ENCODE measurements at regions of chr10 and their contacts with region 1.

Region 1: GRCh38 chr10:6088721-6089390 is at the start of gene RBM17:
- DNase-seq: peak; percentile 98 to 99
- ATAC-seq: peak; percentile 89 to 96 (median 91)
- H3K4me3 ChIP-seq: peak within 1 kb of the TSS; percentile 84
- H3K4me3 Mint-ChIP-seq: peak within 1 kb of the TSS; percentile 90
- H3K27ac ChIP-seq: peak within 1 kb of the TSS; percentile 43
- H3K27ac Mint-ChIP-seq: peak within 1 kb of the TSS; percentile 78 to 82
- H3K4me1 ChIP-seq: peaks cover 29% of the 10 kb centered on the region
- H3K4me1 Mint-ChIP-seq: peaks cover 46 to 53% of the 10 kb centered on the region in 2 donors
- H3K27me3 ChIP-seq: no peaks in the 10 kb centered on the region
- H3K27me3 Mint-ChIP-seq: peaks cover 7 to 8% of the 10 kb centered on the region in 2 donors
- CTCF ChIP-seq: peak; percentile 100
- total RNA-seq, gene RBM17: 120 to 147 (median 147) TPM

Region 2: DNA sequence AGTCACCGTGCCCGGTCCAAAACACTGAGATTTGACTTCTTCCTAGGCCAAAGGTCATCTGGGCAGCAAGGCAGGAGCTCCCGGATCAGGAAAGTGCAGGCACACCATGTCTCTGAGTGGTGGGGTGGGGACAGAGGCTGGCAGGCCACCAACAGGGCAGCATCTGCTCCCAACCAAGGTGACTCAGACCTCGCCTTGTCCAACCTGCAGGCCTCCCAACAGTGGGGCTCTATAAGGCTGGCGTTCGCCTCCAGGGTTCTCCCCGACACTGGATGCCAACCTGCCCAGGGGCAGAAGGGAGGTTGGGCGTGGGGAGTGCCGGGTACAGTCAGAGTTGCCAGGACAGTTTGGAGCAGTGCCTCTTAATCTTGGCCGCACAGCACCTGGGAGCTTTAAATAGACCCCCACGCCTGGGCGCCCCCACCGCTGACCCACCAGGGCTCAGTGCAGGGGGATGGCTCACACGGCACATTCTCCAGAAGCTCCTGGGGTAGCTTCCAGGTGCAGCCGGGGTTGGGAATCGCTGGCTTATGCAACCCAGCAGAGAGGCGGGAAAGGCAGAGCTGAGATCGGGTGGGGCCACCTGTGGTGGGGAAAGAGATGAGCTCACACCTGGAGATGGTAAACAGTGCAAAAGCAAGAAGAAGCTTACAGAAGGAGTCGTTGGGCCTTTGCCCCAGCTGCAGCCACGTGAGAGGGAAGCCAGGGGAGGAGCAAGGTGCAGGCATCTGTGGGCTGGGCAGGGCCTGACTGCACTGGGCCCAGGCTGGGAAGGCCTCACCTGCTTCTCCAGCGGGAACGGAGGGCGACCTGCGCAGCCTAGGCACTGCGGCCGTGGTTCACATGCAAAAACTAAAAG is 600.3 kb before region 1 on chr10:
- intact Hi-C with region 1: no loop called
- DNase-seq: no peak
- ATAC-seq: no peak
- H3K4me3 ChIP-seq: no peak overlapping the region
- H3K4me3 Mint-ChIP-seq: no peak overlapping the region
- H3K27ac ChIP-seq: no peak overlapping the region
- H3K27ac Mint-ChIP-seq: no peak overlapping the region
- H3K4me1 ChIP-seq: no peaks in the 10 kb centered on the region
- H3K4me1 Mint-ChIP-seq: no peaks in the 10 kb centered on the region
- H3K27me3 ChIP-seq: no peaks in the 10 kb centered on the region
- H3K27me3 Mint-ChIP-seq: no peaks in the 10 kb centered on the region
- CTCF ChIP-seq: no peak

Region 3: DNA sequence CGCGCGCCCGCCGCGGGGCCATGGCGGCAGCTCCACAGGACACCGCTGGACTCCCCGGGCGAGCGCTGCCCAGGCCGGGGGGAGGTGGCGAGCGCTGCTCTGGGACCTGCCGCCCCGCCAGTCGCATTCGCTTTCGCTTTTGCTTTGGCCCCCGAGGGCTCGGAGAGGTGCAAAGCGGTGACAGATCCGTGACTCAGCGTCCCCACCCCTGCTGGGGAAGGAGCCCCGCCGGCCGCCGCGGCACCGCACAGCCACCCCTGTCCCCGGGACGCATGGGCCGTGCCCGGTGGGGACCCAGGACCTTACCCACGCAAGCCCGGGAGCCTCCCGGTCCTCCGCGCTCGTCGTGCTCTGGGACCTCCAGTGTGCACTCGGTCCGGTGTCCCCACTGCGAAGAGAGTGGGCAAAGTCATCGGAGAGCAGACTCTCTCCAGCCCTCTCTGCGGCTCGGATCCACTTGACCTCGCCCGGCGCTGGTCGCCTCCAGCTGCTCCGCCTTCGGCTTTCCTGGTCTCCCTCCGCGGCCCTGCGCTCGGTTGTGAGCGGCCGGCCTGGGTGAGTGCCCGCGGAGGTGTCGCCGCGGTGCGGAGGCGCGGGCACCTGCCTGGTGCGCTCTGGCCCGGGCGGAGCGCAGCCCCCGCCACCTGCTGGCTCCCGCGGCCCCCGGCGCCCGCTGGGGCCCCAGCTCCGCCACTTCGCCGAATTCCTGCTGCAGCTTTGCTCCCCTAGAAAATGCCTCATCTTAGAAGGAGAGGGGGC is 111.2 kb before region 1 on chr10 and contains the start of gene IL15RA:
- intact Hi-C with region 1: loop called (anchors 10 kb)
- DNase-seq: peak; percentile 82 to 90
- ATAC-seq: peak; percentile 77 to 88 (median 82)
- H3K4me3 ChIP-seq: peak within 1 kb of the TSS; percentile 97
- H3K4me3 Mint-ChIP-seq: peak within 1 kb of the TSS; percentile 94
- H3K27ac ChIP-seq: peak within 1 kb of the TSS; percentile 89
- H3K27ac Mint-ChIP-seq: peak within 1 kb of the TSS; percentile 84 to 89
- H3K4me1 ChIP-seq: peaks cover 22% of the 10 kb centered on the region
- H3K4me1 Mint-ChIP-seq: peaks cover 23 to 24% of the 10 kb centered on the region in 2 donors
- H3K27me3 ChIP-seq: no peaks in the 10 kb centered on the region
- H3K27me3 Mint-ChIP-seq: no peaks in the 10 kb centered on the region
- CTCF ChIP-seq: no peak
- total RNA-seq, gene IL15RA: 10.7 to 11.8 (median 11.3) TPM

Region 4: GRCh38 chr10:6014241-6014761 is 74.6 kb before region 1 on chr10:
- intact Hi-C with region 1: loop called (anchors 1 kb)
- DNase-seq: peak; percentile 33 to 87
- ATAC-seq: peak; percentile 70 to 84 (median 82)
- H3K4me3 ChIP-seq: no peak overlapping the region
- H3K4me3 Mint-ChIP-seq: no peak overlapping the region
- H3K27ac ChIP-seq: peak overlapping the region; percentile 59
- H3K27ac Mint-ChIP-seq: peak overlapping the region; percentile 43
- H3K4me1 ChIP-seq: peaks cover 8% of the 10 kb centered on the region
- H3K4me1 Mint-ChIP-seq: peaks cover 0 to 8% of the 10 kb centered on the region in 2 donors
- H3K27me3 ChIP-seq: no peaks in the 10 kb centered on the region
- H3K27me3 Mint-ChIP-seq: peaks cover 0 to 4% of the 10 kb centered on the region in 2 donors
- CTCF ChIP-seq: peak; percentile 77

Region 5: GRCh38 chr10:6050801-6051445 is 37.9 kb before region 1 on chr10:
- intact Hi-C with region 1: loop called (anchors 1 kb)
- DNase-seq: peak; percentile 87 to 98
- ATAC-seq: peak; percentile 71 to 88 (median 86)
- H3K4me3 ChIP-seq: peak overlapping the region; percentile 29
- H3K4me3 Mint-ChIP-seq: peak overlapping the region; percentile 96
- H3K27ac ChIP-seq: peak overlapping the region; percentile 74
- H3K27ac Mint-ChIP-seq: peak overlapping the region; percentile 92 to 99
- H3K4me1 ChIP-seq: peaks cover 55% of the 10 kb centered on the region
- H3K4me1 Mint-ChIP-seq: peaks cover 55 to 56% of the 10 kb centered on the region in 2 donors
- H3K27me3 ChIP-seq: no peaks in the 10 kb centered on the region
- H3K27me3 Mint-ChIP-seq: peaks cover 0 to 6% of the 10 kb centered on the region in 2 donors
- CTCF ChIP-seq: no peak

Region 6: DNA sequence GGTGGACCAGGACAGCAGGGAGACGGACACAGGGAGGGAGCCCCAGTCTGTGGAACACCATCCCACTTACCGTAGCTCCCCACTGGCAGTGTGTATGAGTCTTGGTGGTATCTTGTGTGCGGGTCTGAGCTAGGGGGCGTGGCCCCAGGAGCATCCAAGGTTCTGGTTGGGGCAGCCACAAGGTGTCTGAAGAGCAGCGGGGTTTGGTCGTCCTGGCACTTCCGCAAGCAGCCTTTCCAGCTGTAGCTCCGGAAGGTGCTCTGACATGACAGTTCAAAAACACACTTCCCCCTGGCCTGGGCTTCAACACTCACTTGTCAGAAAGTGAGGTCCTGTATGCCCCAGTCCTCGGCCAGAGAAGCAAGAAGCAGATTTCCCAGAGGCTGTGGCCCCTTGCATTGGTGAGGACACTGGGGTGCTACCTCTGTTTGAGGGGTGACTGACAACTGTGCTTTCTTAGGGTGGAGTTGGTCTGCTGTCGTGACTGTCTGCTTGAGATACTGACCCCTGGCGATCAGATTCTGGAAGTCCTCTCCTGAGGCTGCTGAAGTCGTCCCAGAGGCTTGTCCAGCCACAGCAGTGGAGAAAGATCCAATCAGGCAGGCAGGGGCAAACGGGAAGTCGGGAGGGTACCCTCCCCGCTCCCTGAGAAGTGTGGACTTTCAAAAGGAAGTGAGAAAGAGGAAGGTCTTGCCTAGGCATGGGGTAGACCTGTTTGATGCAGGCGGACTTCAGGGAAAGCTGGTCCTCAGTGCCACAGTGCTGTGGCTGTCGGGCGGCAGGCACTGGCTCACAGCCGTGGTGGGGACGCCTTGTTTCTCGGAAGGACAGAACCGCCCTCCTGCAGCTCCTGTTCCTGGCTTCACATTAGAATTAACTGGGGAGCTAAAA is 62.5 kb after region 1 on chr10:
- intact Hi-C with region 1: loop called (anchors 5 kb)
- DNase-seq: peak; percentile 49 to 80
- ATAC-seq: peak; percentile 81 to 89 (median 87)
- H3K4me3 ChIP-seq: peak overlapping the region; percentile 16
- H3K4me3 Mint-ChIP-seq: peak overlapping the region; percentile 84
- H3K27ac ChIP-seq: peak overlapping the region; percentile 66
- H3K27ac Mint-ChIP-seq: peak overlapping the region; percentile 75 to 85
- H3K4me1 ChIP-seq: peaks cover 29% of the 10 kb centered on the region
- H3K4me1 Mint-ChIP-seq: peaks cover 27 to 37% of the 10 kb centered on the region in 2 donors
- H3K27me3 ChIP-seq: no peaks in the 10 kb centered on the region
- H3K27me3 Mint-ChIP-seq: no peaks in the 10 kb centered on the region
- CTCF ChIP-seq: peak; percentile 72

Region 7: DNA sequence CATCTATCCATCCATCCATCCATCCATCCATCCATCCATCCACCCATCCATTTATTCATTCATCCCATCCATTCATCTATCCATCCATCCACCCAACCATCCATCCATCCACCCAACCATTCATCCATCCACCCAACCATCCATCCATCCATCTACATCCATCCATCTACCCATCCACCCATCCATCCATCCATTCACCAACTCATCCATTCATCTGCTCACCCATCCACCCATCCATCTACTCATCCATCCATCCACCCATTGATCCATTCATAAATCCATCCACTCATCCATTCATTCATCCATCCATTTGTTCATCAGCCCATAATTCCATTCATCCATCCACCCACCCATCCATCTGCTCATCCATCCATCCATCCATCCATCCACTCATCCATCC is 170.3 kb after region 1 on chr10:
- intact Hi-C with region 1: no loop called
- DNase-seq: no peak
- ATAC-seq: no peak
- H3K4me3 ChIP-seq: no peak overlapping the region
- H3K4me3 Mint-ChIP-seq: no peak overlapping the region
- H3K27ac ChIP-seq: no peak overlapping the region
- H3K27ac Mint-ChIP-seq: no peak overlapping the region
- H3K4me1 ChIP-seq: no peaks in the 10 kb centered on the region
- H3K4me1 Mint-ChIP-seq: no peaks in the 10 kb centered on the region
- H3K27me3 ChIP-seq: no peaks in the 10 kb centered on the region
- H3K27me3 Mint-ChIP-seq: peaks cover 0 to 3% of the 10 kb centered on the region in 2 donors
- CTCF ChIP-seq: no peak

Region 8: GRCh38 chr10:6401562-6402348 is 312.9 kb after region 1 on chr10:
- intact Hi-C with region 1: loop called (anchors 5 kb)
- DNase-seq: peak; percentile 36 to 86
- ATAC-seq: peak; percentile 84 to 97 (median 95)
- H3K4me3 ChIP-seq: no peak overlapping the region
- H3K4me3 Mint-ChIP-seq: peak overlapping the region; percentile 7
- H3K27ac ChIP-seq: no peak overlapping the region
- H3K27ac Mint-ChIP-seq: peak overlapping the region in 1 of 2 donors; percentile 51
- H3K4me1 ChIP-seq: peaks cover 9% of the 10 kb centered on the region
- H3K4me1 Mint-ChIP-seq: peaks cover 7 to 8% of the 10 kb centered on the region in 2 donors
- H3K27me3 ChIP-seq: no peaks in the 10 kb centered on the region
- H3K27me3 Mint-ChIP-seq: peaks cover 6 to 13% of the 10 kb centered on the region in 2 donors
- CTCF ChIP-seq: peak; percentile 63

Region 9: GRCh38 chr10:6678211-6678803 is 589.5 kb after region 1 on chr10:
- intact Hi-C with region 1: loop called (anchors 5 kb)
- DNase-seq: peak; percentile 44 to 84
- ATAC-seq: peak; percentile 56 to 69 (median 67)
- H3K4me3 ChIP-seq: no peak overlapping the region
- H3K4me3 Mint-ChIP-seq: no peak overlapping the region
- H3K27ac ChIP-seq: no peak overlapping the region
- H3K27ac Mint-ChIP-seq: no peak overlapping the region
- H3K4me1 ChIP-seq: no peaks in the 10 kb centered on the region
- H3K4me1 Mint-ChIP-seq: peaks cover 4 to 5% of the 10 kb centered on the region in 2 donors
- H3K27me3 ChIP-seq: peaks cover 4% of the 10 kb centered on the region
- H3K27me3 Mint-ChIP-seq: peaks cover 19 to 52% of the 10 kb centered on the region in 2 donors
- CTCF ChIP-seq: peak; percentile 78

Measured in natural killer cell (primary cell).